ENCODE measurements at regions of chr7 and their contacts with region 1.

Region 1: DNA sequence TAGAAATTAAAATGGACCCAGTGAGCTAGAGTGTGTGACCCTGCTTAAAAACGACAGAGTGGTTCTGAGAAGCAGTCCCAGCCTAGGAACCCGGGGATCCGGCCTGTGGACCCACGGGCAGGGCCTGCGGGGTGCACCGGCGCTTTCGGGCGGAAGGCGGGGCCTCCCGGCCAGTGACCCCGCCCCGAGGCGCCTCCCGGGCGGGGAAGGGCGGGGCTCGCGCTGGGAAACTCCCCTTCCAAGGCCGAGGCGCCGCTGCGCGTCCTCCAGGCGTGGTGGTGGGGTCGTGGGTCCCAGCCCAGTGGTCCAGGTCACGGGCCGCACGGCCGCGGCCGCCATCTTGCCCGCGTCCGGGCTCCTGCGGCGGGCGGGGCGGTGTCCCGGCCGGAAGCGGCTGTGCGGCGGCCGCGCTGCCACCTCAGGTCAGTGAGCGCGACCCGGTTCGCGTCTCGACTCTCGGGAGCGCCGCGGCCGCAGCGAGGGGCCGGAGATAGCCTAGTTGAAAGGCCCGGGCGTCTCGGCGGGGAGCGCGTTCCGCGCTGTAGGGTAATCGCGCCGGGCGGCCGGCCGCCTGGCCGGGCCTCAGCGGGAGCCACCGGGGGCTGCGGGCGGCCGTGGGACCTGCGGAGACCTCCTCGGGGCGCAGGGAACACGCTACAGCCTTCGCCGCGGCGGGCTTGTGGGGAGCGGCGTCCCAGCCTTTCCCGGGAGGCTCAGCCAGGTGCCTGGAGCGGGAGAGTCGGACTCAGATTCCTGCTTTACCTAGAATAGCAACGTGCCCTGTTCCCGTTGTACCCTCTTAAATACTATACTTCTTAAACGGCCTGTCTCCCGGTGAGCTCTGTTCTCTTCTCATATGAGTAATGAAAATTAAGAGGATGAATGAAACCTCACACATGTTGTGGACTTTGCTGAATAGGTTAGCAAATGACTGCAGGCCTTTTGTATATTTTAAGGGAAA is at the start of gene MIOS:
- DNase-seq: peak; percentile 78 to 89 (median 86)
- H3K4me3 ChIP-seq: peak within 1 kb of the TSS; percentile 63 to 98 (median 83)
- H3K4me3 Mint-ChIP-seq: peak within 1 kb of the TSS; percentile 80 to 83
- H3K27ac ChIP-seq: peak within 1 kb of the TSS; percentile 73 to 89
- H3K27ac Mint-ChIP-seq: peak within 1 kb of the TSS; percentile 67 to 97 (median 94)
- H3K4me1 ChIP-seq: peaks cover 33 to 51% of the 10 kb centered on the region in 2 donors
- H3K4me1 Mint-ChIP-seq: peaks cover 34% of the 10 kb centered on the region
- H3K27me3 ChIP-seq: no peaks in the 10 kb centered on the region
- H3K27me3 Mint-ChIP-seq: no peaks in the 10 kb centered on the region
- CTCF ChIP-seq: no peak
- polyA plus RNA-seq, gene MIOS: 18.3 to 32.6 (median 20.2) TPM

Region 2: DNA sequence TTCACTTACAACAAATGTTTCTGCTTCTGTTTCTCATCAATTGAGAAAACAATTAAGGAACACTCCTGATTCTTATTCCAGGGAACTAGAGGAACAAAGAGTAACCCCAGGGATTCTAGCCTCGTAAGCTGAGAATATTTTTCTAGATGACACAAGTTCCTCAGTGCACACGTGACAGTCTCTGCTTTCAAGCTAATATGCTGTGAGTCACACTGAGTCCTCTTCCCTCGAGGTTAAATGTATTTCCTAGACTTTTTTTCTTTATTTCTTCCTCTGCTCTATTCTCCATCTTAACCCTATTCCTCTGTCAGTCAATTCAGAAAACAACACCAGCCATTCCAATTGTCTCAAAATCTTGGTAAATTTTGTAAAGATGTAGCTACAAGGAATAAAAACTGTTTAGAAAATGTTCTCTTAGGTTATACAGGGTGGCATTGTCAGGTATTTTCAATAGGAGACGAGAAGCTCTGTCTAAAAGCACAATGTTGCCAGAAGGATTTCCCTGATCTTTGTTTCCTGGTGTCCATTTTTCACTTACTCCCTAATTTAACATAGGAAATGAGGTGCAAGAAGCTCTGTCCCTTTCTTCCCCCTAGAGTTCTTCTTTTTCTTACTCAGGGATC is 390.4 kb before region 1 on chr7:
- intact Hi-C with region 1: loop called (anchors 10 kb)
- DNase-seq: peak; percentile 65 to 89 (median 88)
- H3K4me3 ChIP-seq: peak overlapping the region in 1 of 3 experiments; percentile 18
- H3K4me3 Mint-ChIP-seq: peak overlapping the region in 1 of 2 donors; percentile 48
- H3K27ac ChIP-seq: peak overlapping the region in 1 of 2 donors; percentile 54
- H3K27ac Mint-ChIP-seq: peak overlapping the region; percentile 43 to 87 (median 84)
- H3K4me1 ChIP-seq: peaks cover 22 to 28% of the 10 kb centered on the region in 2 donors
- H3K4me1 Mint-ChIP-seq: peaks cover 23% of the 10 kb centered on the region
- H3K27me3 ChIP-seq: no peaks in the 10 kb centered on the region
- H3K27me3 Mint-ChIP-seq: peaks cover 0 to 2% (median 0%) of the 10 kb centered on the region in 3 donors
- CTCF ChIP-seq: no peak

Region 3: DNA sequence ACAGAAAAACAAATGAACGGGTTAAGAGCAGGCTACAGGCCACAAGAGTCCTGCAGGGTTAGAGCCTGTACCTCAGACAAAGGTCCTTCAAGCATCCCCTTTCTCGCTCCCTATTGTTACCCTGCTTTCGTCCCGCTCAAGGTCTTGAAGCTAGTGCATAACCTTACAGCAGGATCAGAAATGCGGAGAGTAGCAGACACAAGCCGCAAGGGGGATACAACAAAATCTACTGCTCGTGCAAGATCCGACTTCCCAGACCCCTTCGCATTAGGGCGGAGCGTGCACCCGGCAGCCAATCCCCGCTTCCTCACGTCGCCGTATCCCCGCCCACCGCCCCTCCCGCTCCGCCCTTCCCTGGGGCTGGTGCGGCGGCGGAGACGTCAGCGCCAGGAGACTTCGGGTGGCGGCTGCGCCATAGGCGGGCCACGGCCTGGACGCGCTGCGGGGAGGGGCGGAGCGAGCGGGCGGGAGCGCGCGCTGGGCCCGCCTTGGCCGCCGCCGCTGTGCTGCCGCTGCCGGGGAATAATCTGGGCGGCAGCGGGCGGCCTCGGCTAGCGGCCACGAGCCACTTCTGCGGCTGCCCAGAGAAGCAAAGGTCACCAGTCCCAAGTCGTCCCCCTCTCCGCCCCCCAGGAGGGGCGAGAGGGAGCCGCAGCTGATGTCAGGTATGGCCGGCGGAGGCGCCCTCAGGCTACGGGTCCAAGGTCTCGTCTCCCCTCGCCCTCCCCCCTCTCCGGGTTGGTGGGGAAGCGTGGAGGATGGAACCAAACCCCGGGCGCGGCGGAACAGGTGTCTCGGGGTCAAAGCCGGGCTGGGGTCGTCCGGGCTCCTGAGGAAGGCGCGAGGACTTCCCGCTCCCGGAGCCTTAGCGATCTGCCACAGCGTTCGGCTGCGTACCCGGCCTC is 384.5 kb before region 1 on chr7 and contains the start of gene C1GALT1:
- intact Hi-C with region 1: loop called (anchors 10 kb)
- DNase-seq: peak; percentile 93 to 98 (median 97)
- H3K4me3 ChIP-seq: peak within 1 kb of the TSS; percentile 84 to 99 (median 87)
- H3K4me3 Mint-ChIP-seq: peak within 1 kb of the TSS; percentile 86 to 96
- H3K27ac ChIP-seq: peak within 1 kb of the TSS; percentile 97 to 99
- H3K27ac Mint-ChIP-seq: peak within 1 kb of the TSS; percentile 96 to 99 (median 98)
- H3K4me1 ChIP-seq: peaks cover 22 to 34% of the 10 kb centered on the region in 2 donors
- H3K4me1 Mint-ChIP-seq: peaks cover 37% of the 10 kb centered on the region
- H3K27me3 ChIP-seq: no peaks in the 10 kb centered on the region
- H3K27me3 Mint-ChIP-seq: no peaks in the 10 kb centered on the region
- CTCF ChIP-seq: peak; percentile 21
- polyA plus RNA-seq, gene C1GALT1: 12.5 to 47.7 (median 45.1) TPM

Region 4: DNA sequence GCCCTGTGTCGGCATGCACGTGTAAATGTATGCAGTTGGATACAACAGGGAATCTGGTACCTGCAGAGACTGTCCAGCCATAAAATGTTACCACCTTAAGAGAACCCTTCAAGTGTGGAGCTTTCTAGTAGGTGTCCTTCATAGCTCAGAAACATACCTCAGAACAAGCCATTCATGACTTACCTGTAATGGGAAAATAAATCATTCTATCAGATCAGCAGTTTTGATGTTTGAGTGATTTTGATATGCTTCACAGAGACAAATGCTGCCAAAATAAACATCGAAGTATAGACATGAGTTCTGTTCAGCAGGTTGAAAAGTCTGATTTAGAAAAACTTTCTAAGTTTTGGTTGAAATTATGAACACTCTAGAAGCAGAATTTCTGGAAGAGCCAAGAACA is 40.1 kb after region 1 on chr7:
- intact Hi-C with region 1: no loop called
- DNase-seq: no peak
- H3K4me3 ChIP-seq: no peak overlapping the region
- H3K4me3 Mint-ChIP-seq: no peak overlapping the region
- H3K27ac ChIP-seq: no peak overlapping the region
- H3K27ac Mint-ChIP-seq: no peak overlapping the region
- H3K4me1 ChIP-seq: no peaks in the 10 kb centered on the region
- H3K4me1 Mint-ChIP-seq: no peaks in the 10 kb centered on the region
- H3K27me3 ChIP-seq: no peaks in the 10 kb centered on the region
- H3K27me3 Mint-ChIP-seq: no peaks in the 10 kb centered on the region
- CTCF ChIP-seq: no peak

Region 5: GRCh38 chr7:7640221-7641128 is 73.5 kb after region 1 on chr7 and contains the start of gene UMAD1:
- intact Hi-C with region 1: loop called (anchors 10 kb)
- DNase-seq: peak; percentile 97 to 98 (median 98)
- H3K4me3 ChIP-seq: peak within 1 kb of the TSS; percentile 74 to 92 (median 78)
- H3K4me3 Mint-ChIP-seq: peak within 1 kb of the TSS; percentile 94 to 98
- H3K27ac ChIP-seq: peak within 1 kb of the TSS; percentile 70 to 90
- H3K27ac Mint-ChIP-seq: peak within 1 kb of the TSS; percentile 94 to 98 (median 97)
- H3K4me1 ChIP-seq: peaks cover 17 to 20% of the 10 kb centered on the region in 2 donors
- H3K4me1 Mint-ChIP-seq: peaks cover 24% of the 10 kb centered on the region
- H3K27me3 ChIP-seq: no peaks in the 10 kb centered on the region
- H3K27me3 Mint-ChIP-seq: peaks cover 0 to 2% (median 0%) of the 10 kb centered on the region in 3 donors
- CTCF ChIP-seq: no peak
- polyA plus RNA-seq, gene UMAD1: 6.2 to 22.7 (median 18.6) TPM

Region 6: GRCh38 chr7:7968543-7969305 is 401.8 kb after region 1 on chr7 and contains the start of gene GLCCI1:
- intact Hi-C with region 1: loop called in 1 of 2 experiments (anchors 10 kb)
- DNase-seq: peak; percentile 90 to 94 (median 91)
- H3K4me3 ChIP-seq: peak within 1 kb of the TSS; percentile 78 to 94 (median 82)
- H3K4me3 Mint-ChIP-seq: peak within 1 kb of the TSS; percentile 93 to 98
- H3K27ac ChIP-seq: peak within 1 kb of the TSS; percentile 55 to 74
- H3K27ac Mint-ChIP-seq: peak within 1 kb of the TSS; percentile 70 to 90 (median 83)
- H3K4me1 ChIP-seq: peaks cover 12 to 28% of the 10 kb centered on the region in 2 donors
- H3K4me1 Mint-ChIP-seq: peaks cover 4% of the 10 kb centered on the region
- H3K27me3 ChIP-seq: peaks cover 2 to 12% of the 10 kb centered on the region in 2 donors
- H3K27me3 Mint-ChIP-seq: peaks cover 0 to 1% (median 0%) of the 10 kb centered on the region in 3 donors
- CTCF ChIP-seq: no peak
- polyA plus RNA-seq, gene GLCCI1: 0.89 to 2.1 (median 1.1) TPM